ENCODE measurements at regions of chr16 and their contacts with region 1.

Region 1: DNA sequence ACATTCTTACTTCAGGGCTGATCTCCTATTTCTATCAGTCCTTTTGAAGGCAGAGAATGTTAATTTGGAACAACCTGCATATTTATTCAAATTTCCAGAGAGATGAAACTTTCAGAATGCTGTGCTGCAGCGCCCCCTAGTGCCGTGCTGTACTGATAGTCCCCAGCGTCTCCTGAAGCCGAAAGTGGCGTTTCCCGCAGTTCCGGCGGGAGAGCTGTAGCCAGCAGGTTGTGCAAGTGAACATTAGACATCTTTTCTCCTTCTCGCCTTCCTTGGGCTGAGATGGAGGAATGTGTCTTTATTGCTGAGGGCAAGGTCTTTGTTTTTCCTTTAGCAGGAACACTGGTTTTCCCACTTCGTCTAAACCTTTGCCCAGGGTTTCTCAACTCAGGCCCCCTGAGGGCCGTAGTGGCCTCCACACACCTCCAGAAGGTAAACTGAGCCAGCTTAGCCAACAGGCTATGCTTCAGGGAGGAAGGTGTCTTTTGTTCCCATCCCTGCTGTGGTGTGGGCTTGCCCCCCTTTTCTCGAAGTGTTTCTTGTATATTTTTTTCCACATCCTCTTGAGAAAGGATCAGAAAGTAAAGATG is 26.4 kb downstream of the USP10 start:
- DNase-seq: no peak
- H3K4me3 ChIP-seq: no peak overlapping the region
- H3K27me3 ChIP-seq: no peaks in the 10 kb centered on the region
- CTCF ChIP-seq: peak; percentile 92

Region 2: DNA sequence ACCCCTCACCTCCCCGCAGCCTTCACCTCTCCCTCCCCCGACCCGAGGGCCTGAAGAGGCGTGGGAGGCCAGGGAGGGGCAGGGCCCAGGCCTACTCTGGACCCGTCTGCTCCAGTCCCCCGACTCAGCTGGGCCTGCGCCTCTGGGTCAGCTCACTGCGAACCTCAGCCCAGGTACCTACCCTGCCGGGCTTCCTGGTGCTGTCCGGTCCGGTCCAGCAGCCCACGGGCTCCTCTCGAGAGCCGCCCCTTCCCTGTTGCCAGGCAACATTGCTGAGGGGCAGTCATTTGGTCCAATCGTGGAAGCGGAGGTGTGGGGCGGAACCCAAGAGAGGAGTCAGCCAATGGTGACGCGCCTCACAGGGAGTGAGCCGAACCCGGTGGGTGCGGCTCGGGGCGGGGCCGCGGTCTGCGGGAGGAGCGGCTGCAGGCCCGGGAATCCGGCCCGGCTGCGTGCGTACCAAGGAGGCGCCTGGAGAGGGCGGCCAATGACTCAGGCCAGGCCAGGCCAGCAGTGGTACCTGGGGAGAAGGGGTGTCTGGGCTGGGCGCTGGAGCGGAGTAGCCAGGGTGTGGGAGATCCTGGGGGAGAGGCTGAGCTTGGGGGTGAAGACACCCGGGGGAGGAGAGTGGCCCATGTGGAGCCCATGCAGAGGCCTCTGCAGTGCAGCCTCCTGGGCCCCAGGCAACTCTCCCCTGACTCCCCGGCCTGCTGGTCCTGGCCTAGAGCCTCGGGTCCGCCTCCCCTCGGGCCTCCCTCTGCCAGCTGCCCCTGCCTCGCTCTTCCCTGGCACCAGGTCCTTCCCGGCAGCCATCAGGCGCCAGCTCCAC is 221.5 kb before region 1 on chr16 and contains the start of gene MEAK7:
- CTCF ChIA-PET with region 1: interaction called, 16 read pairs
- POLR2A ChIA-PET with region 1: no interaction called
- DNase-seq: peak; percentile 83
- H3K4me3 ChIP-seq: peak within 1 kb of the TSS; percentile 67
- H3K27me3 ChIP-seq: no peaks in the 10 kb centered on the region
- CTCF ChIP-seq: no peak
- polyA plus RNA-seq, gene MEAK7: 29.1 and 41.2 TPM in 2 replicates

Region 3: DNA sequence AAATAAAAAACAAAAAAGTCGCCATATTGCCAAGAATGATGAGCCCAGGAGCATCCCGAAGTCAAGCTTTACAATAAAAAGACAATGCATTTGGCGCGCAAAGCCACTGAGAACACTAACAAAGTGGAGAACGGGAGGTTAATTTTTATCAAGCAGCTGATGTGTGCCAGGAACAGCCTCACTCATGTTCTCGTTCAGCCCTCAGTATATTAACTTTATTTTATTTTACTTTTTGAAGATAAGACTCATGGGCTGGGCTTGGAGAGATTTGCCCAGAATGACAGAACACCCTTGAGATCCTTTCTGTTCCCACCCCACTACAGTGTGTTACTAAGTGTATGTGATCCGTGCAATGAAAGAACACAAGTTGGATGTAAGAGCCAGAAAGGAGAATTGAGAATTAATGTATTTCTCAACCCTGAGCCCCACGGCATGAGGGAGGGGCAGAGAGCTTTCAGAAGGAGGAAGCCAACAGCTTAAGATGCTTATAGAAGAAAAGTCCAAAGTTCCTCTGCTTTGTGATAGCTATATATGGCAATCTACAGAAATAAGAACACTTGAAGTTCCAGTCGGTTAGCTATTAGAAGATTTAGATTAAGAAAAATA is 156.7 kb before region 1 on chr16:
- CTCF ChIA-PET with region 1: no interaction called
- POLR2A ChIA-PET with region 1: no interaction called
- DNase-seq: no peak
- H3K4me3 ChIP-seq: no peak overlapping the region
- H3K27me3 ChIP-seq: no peaks in the 10 kb centered on the region
- CTCF ChIP-seq: no peak

Region 4: DNA sequence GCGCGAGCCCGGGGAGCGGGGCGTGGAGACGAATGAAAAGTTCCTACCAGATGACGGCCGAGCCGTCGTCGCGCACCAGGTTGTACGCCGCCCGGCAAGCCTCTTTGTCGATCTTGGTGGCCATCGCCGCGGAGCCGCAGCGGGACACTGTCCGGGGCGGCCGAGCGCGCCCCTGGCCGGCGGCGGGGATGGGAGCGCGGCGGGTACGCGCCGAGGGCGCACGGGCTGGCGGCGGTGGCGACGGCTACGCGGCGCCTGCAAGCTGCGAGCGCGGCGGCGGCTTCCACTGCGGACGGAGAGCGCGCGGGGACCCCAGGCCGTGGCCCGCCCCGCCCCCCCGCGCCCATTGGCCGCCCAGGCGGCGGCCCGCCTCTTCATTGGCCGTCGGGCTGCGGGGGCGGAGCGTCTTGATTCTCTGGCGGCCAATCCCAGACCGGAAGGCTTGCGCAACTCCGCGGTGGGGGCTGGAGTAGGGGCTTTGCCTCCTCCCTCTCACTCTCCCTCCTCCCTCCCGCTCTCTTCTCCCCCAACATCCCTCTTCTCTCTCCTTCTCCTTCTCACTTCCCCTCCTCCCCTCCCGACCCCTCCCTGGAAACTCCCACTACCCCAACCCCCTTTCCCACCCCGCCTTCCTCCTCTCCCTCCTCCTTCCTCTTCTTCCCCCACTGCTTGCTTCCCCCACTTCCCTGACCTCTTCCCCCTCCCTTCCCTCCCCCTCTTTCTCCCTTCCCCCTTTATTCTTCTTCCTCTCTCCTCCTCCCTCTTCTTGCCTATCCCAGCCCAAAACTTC is 108.2 kb before region 1 on chr16 and contains the start of gene COTL1:
- CTCF ChIA-PET with region 1: interaction called, 38 read pairs
- POLR2A ChIA-PET with region 1: no interaction called
- DNase-seq: peak; percentile 83
- H3K4me3 ChIP-seq: peak within 1 kb of the TSS; percentile 86
- H3K27me3 ChIP-seq: no peaks in the 10 kb centered on the region
- CTCF ChIP-seq: no peak
- polyA plus RNA-seq, gene COTL1: 161 and 166 TPM in 2 replicates

Region 5: GRCh38 chr16:84647828-84648594 is 78.2 kb before region 1 on chr16 and contains the start of gene KLHL36:
- CTCF ChIA-PET with region 1: interaction called, 14 read pairs
- POLR2A ChIA-PET with region 1: no interaction called
- DNase-seq: no peak
- H3K4me3 ChIP-seq: peak within 1 kb of the TSS; percentile 82
- H3K27me3 ChIP-seq: no peaks in the 10 kb centered on the region
- CTCF ChIP-seq: no peak
- polyA plus RNA-seq, gene KLHL36: 33.2 and 43.7 TPM in 2 replicates

Region 6: GRCh38 chr16:84672276-84673202 is 53.6 kb before region 1 on chr16:
- CTCF ChIA-PET with region 1: interaction called, 126 read pairs
- POLR2A ChIA-PET with region 1: no interaction called
- DNase-seq: no peak
- H3K4me3 ChIP-seq: no peak overlapping the region
- H3K27me3 ChIP-seq: no peaks in the 10 kb centered on the region
- CTCF ChIP-seq: peak; percentile 96

Region 7: GRCh38 chr16:84699712-84700445 is 26.3 kb before region 1 on chr16 and contains the start of gene USP10:
- CTCF ChIA-PET with region 1: interaction called, 21 read pairs
- POLR2A ChIA-PET with region 1: no interaction called
- DNase-seq: no peak
- H3K4me3 ChIP-seq: peak within 1 kb of the TSS; percentile 83
- H3K27me3 ChIP-seq: no peaks in the 10 kb centered on the region
- CTCF ChIP-seq: no peak
- polyA plus RNA-seq, gene USP10: 39.6 and 55.1 TPM in 2 replicates